ENCODE measurements at regions of chr6 and their contacts with region 1.

Region 1: DNA sequence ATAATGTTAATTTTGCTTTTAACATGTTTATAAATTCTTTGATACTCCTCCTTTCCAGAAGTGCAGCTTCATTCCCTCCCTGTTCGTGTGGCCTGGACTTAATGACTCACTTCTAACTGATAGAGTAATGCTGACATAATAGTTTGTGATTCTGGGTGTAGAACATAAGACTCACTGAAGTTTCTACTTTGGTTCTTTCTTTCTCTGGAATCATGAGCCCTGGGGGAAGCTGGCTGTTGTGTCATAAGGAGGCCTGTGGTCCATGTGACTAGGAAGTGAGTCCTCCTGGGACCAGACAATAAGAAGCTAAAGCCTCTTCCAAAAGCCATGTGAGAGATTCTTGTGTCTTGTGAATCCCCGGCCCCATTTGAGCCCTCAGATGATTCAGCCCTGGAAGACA is 30.5 kb upstream of the HLA-G start:
- DNase-seq: no peak
- H3K4me3 ChIP-seq: no peak overlapping the region
- H3K27ac ChIP-seq: no peak overlapping the region
- H3K4me1 ChIP-seq: peaks cover 0 to 11% (median 0%) of the 10 kb centered on the region in 3 donors
- H3K27me3 ChIP-seq: peaks cover 0 to 65% (median 0%) of the 10 kb centered on the region in 4 donors
- CTCF ChIP-seq: no peak
- POLR2A ChIP-seq: no peak

Region 2: GRCh38 chr6:29953001-29953441 is 155.9 kb after region 1 on chr6:
- intact Hi-C with region 1: loop called (anchors 5 kb)
- DNase-seq: no peak
- H3K4me3 ChIP-seq: no peak overlapping the region
- H3K27ac ChIP-seq: no peak overlapping the region
- H3K4me1 ChIP-seq: peaks cover 0 to 6% (median 0%) of the 10 kb centered on the region in 3 donors
- H3K27me3 ChIP-seq: no peaks in the 10 kb centered on the region
- CTCF ChIP-seq: no peak
- POLR2A ChIP-seq: no peak

Measured in esophagus squamous epithelium (tissue), 5 donors.